ENCODE measurements at regions of chr19 and their contacts with region 1.

Region 1: DNA sequence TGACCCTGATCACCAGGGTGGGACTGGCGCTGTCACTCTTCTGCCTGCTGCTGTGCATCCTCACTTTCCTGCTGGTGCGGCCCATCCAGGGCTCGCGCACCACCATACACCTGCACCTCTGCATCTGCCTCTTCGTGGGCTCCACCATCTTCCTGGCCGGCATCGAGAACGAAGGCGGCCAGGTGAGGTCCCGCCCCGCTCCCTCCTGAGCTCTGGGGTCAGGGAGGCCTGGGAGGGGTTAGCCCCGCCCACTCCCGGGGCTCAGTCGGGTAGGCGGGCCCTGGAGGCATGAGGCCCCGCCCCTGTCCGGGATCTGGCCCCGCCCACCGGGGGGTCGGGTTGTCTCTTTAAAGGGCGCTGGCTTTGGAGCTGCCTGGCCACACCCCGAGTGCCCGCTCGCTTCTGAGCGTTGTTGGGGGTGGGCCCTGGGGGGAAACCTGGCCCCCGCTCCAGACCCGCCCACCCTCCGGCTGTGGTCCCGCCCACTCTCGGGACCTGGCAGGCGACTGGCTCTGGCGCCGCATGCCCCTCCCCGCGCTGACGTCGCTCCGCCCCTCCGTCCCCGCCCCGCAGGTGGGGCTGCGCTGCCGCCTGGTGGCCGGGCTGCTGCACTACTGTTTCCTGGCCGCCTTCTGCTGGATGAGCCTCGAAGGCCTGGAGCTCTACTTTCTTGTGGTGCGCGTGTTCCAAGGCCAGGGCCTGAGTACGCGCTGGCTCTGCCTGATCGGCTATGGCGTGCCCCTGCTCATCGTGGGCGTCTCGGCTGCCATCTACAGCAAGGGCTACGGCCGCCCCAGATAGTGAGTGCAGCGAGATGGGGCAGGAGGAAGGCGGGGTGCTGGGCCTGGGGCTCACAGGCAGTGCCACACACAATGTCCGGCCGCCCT is 13.1 kb downstream of the DDX39A start:
- DNase-seq: peak; percentile 96
- H3K4me3 ChIP-seq: peak overlapping the region; percentile 40 to 55 (median 44)
- H3K27ac ChIP-seq: peak overlapping the region; percentile 66 to 87 (median 80)
- H3K4me1 ChIP-seq: peaks cover 5 to 19% (median 18%) of the 10 kb centered on the region in 4 donors
- H3K27me3 ChIP-seq: no peaks in the 10 kb centered on the region
- CTCF ChIP-seq: peak; percentile 97 to 99 (median 98)
- EP300 ChIP-seq: no peak
- POLR2A ChIP-seq: no peak

Region 2: GRCh38 chr19:14363183-14364097 is 42.6 kb before region 1 on chr19:
- intact Hi-C with region 1: loop called (anchors 5 kb)
- DNase-seq: no peak
- H3K4me3 ChIP-seq: peak overlapping the region; percentile 45 to 50 (median 48)
- H3K27ac ChIP-seq: peak overlapping the region; percentile 70 to 77 (median 72)
- H3K4me1 ChIP-seq: peaks cover 23 to 32% (median 29%) of the 10 kb centered on the region in 4 donors
- H3K27me3 ChIP-seq: no peaks in the 10 kb centered on the region
- CTCF ChIP-seq: no peak
- EP300 ChIP-seq: no peak
- POLR2A ChIP-seq: no peak